GM12878 (cell line): ENCODE measurements at regions of chr1 and their contacts with region 1.

Region 1: GRCh38 chr1:35451125-35451528 is 106.1 kb downstream of the KIAA0319L start:
- DNase-seq: no peak
- ATAC-seq: peak; percentile 99
- H3K4me3 ChIP-seq: no peak overlapping the region
- H3K27ac ChIP-seq: no peak overlapping the region
- H3K4me1 ChIP-seq: no peaks in the 10 kb centered on the region
- H3K27me3 ChIP-seq: no peaks in the 10 kb centered on the region
- CTCF ChIP-seq: peak; percentile 87 to 90 (median 88)
- EP300 ChIP-seq: no peak
- POLR2A ChIP-seq: no peak
- RAD21 ChIP-seq: peak; percentile 97

Region 2: GRCh38 chr1:35437200-35437599 is 13.9 kb before region 1 on chr1:
- CTCF ChIA-PET with region 1: interaction called, 49 read pairs
- POLR2A ChIA-PET with region 1: no interaction called
- RAD21 ChIA-PET with region 1: interaction called, 6 read pairs
- SMC1A ChIA-PET with region 1: interaction called, 11 read pairs
- in situ Hi-C with region 1: no loop called
- intact Hi-C with region 1: no loop called
- DNase-seq: no peak
- ATAC-seq: no peak
- H3K4me3 ChIP-seq: no peak overlapping the region
- H3K27ac ChIP-seq: no peak overlapping the region
- H3K4me1 ChIP-seq: no peaks in the 10 kb centered on the region
- H3K27me3 ChIP-seq: no peaks in the 10 kb centered on the region
- CTCF ChIP-seq: no peak
- EP300 ChIP-seq: no peak
- POLR2A ChIP-seq: no peak
- RAD21 ChIP-seq: no peak

Region 3: DNA sequence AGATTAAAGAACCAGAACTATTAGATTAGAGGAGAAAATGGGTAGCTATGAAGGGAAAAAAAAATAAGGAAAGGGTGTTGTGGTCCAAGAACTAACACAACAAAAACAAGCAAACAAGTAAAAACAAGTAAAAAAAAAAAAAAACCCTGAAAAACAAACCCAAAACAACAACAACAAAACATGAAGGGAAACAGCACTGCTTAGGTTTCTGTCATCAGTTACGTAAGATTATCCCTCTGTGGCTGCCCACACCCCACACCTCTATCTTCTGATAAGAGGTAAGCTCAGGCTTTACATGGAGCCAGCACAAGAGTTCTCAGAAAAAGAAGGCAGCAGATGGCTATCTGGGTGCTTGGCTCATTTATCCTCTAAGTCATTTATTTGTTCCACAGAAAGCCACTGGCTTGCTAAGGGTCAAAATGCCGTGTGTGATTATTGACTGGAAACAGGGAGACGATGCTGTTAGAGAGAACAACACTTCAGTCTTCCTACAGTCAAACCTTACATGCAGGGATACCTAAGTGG is 48.6 kb after region 1 on chr1:
- CTCF ChIA-PET with region 1: interaction called, 34 read pairs
- POLR2A ChIA-PET with region 1: no interaction called
- RAD21 ChIA-PET with region 1: interaction called, 28 read pairs
- SMC1A ChIA-PET with region 1: interaction called, 44 read pairs
- in situ Hi-C with region 1: no loop called
- intact Hi-C with region 1: no loop called
- DNase-seq: no peak
- ATAC-seq: no peak; the same call in 2 of the 3 replicates
- H3K4me3 ChIP-seq: no peak overlapping the region
- H3K27ac ChIP-seq: no peak overlapping the region
- H3K4me1 ChIP-seq: no peaks in the 10 kb centered on the region
- H3K27me3 ChIP-seq: no peaks in the 10 kb centered on the region
- CTCF ChIP-seq: no peak
- EP300 ChIP-seq: no peak
- POLR2A ChIP-seq: no peak
- RAD21 ChIP-seq: no peak

Region 4: DNA sequence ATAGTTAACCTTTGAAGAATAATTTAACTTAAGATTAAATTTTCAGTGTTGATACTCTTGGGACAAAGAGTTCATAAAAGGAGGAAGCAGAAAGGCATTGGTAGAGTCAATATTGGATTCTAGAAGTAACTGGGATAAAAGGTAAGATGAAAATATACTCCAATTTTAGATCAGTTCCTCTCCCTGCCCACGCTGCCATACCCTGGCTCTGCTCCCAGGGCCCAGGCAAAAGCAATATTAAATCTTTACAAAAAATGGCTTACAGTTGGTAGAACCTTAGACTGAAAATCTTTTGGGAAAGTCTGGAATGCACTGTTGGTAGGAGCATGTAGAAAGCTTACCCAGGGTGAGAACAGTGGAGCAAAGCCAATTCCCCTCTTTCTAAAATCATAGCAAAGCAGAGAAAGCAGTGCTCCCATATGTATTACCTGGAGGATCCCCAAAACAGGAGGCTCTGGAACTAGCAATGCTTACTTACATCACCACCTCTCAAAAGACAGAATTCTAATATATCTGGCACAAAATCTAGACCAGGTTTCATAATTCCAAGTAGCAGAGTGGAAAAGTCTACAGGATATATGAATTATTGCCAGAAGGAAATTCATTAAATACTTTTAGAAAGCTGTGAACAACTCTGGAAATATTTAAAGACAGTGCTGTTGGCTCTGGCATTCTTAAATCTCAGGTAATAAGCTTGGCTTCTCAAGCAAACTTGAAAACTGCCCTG is 81.5 kb after region 1 on chr1:
- CTCF ChIA-PET with region 1: interaction called, 260 read pairs
- POLR2A ChIA-PET with region 1: interaction called, 9 read pairs
- RAD21 ChIA-PET with region 1: interaction called, 139 read pairs
- SMC1A ChIA-PET with region 1: interaction called, 254 read pairs
- in situ Hi-C with region 1: no loop called
- intact Hi-C with region 1: no loop called
- DNase-seq: no peak
- ATAC-seq: no peak
- H3K4me3 ChIP-seq: no peak overlapping the region
- H3K27ac ChIP-seq: no peak overlapping the region
- H3K4me1 ChIP-seq: 0 out of 2 replicates have a peak, but pooled peaks cover under 1% of the 10 kb centered on the region
- H3K27me3 ChIP-seq: no peaks in the 10 kb centered on the region
- CTCF ChIP-seq: no peak
- EP300 ChIP-seq: no peak
- POLR2A ChIP-seq: no peak
- RAD21 ChIP-seq: no peak

Region 5: DNA sequence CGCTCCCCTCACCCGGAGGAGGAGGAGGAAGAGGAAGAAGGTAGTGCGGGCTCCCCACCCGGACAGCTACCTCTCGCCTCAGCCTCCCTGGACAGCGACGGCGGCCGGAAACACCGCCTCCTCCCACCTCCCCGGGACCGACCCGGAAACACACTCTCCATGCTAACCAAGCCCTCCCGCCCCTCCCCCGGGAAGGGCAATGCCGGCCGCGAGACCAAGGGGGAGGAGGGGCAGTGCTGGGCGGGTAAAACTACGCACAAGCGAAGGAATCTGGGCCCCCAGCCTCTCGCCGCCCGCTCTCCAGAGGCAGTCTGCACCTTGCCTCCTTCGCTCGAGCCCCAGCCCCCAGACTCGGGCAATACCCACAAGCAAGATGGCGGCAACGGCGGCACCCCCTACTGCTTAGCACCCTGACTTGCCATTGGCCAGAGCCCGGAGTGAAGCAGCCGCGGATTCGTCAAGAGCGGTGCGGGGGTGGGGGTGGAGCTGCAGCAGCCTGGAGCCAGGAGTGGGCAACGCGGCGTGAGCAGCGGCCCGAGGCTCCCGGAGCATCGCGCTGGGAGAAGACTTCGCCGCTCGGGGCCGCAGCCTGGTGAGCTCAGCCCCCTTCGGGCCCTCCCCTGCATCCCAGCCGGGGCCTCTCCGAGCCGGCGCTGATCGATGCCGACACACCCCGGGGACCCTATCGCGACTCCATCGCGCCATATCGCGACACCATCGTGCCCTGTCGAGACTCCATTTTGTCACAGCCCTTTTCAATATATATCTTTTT is 106.4 kb after region 1 on chr1 and contains the starts of genes KIAA0319L and NCDN:
- CTCF ChIA-PET with region 1: interaction called, 95 read pairs
- POLR2A ChIA-PET with region 1: interaction called, 5 read pairs
- RAD21 ChIA-PET with region 1: interaction called, 46 read pairs
- SMC1A ChIA-PET with region 1: interaction called, 67 read pairs
- in situ Hi-C with region 1: loop called (anchors 5 kb)
- intact Hi-C with region 1: no loop called
- DNase-seq: peak; percentile 85
- ATAC-seq: peak; percentile 94
- H3K4me3 ChIP-seq: peak within 1 kb of the TSS; percentile 67
- H3K27ac ChIP-seq: peak within 1 kb of the TSS; percentile 97
- H3K4me1 ChIP-seq: peaks cover 10% of the 10 kb centered on the region
- H3K27me3 ChIP-seq: no peaks in the 10 kb centered on the region
- CTCF ChIP-seq: no peak
- EP300 ChIP-seq: no peak
- POLR2A ChIP-seq: peak; percentile 93
- RAD21 ChIP-seq: no peak
- polyA plus RNA-seq, gene KIAA0319L: 2.6 to 5.9 TPM
- polyA plus RNA-seq, gene NCDN: 1.8 to 2.0 TPM

Region 6: GRCh38 chr1:35603468-35603867 is 152.3 kb after region 1 on chr1:
- CTCF ChIA-PET with region 1: interaction called, 10 read pairs
- POLR2A ChIA-PET with region 1: interaction called, 4 read pairs
- RAD21 ChIA-PET with region 1: no interaction called
- SMC1A ChIA-PET with region 1: interaction called, 3 read pairs
- in situ Hi-C with region 1: no loop called
- intact Hi-C with region 1: no loop called
- DNase-seq: no peak
- ATAC-seq: no peak
- H3K4me3 ChIP-seq: no peak overlapping the region
- H3K27ac ChIP-seq: no peak overlapping the region
- H3K4me1 ChIP-seq: no peaks in the 10 kb centered on the region
- H3K27me3 ChIP-seq: no peaks in the 10 kb centered on the region
- CTCF ChIP-seq: no peak
- EP300 ChIP-seq: no peak
- POLR2A ChIP-seq: no peak
- RAD21 ChIP-seq: no peak

Region 7: DNA sequence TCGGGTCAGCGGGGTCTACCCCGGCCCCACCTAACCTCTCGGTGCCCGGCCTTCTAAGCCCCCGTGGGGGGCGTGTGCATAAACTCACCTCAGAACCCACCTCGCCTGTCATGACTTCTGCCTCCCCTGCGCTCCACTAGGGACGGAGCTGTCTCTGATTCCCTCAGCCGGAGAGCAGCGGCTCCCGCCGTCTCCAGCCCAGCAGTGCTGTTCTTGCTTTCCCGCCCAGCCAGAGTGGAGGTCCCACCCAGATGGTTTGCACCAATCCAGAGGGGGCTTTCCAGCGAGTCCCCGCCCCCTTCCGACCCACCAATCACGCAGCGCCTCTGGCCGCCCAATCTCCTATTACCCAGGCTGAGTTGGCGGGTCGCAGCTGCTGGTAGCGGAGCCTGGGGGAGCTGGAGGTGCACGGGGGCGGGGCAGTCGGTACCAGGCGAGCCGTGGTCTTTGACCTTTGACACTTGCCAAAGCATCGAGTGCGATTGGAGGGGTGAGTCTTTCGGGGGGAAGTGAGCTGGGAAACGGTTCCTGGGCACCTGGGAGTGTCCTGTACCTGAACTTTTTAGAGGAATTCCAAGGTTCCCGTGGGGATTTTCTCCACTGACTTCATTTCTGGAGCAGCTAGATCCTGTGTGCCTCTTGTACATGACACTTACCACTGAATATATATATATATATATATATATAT is 318.8 kb after region 1 on chr1 and contains the start of gene CLSPN:
- CTCF ChIA-PET with region 1: interaction called, 18 read pairs
- POLR2A ChIA-PET with region 1: no interaction called
- RAD21 ChIA-PET with region 1: interaction called, 10 read pairs
- SMC1A ChIA-PET with region 1: interaction called, 13 read pairs
- in situ Hi-C with region 1: no loop called
- intact Hi-C with region 1: loop called (anchors 5 kb)
- DNase-seq: peak; percentile 86
- ATAC-seq: peak; percentile 95
- H3K4me3 ChIP-seq: peak within 1 kb of the TSS; percentile 78
- H3K27ac ChIP-seq: peak within 1 kb of the TSS; percentile 91
- H3K4me1 ChIP-seq: no peaks in the 10 kb centered on the region
- H3K27me3 ChIP-seq: no peaks in the 10 kb centered on the region
- CTCF ChIP-seq: no peak
- EP300 ChIP-seq: no peak
- POLR2A ChIP-seq: peak; percentile 91
- RAD21 ChIP-seq: no peak
- polyA plus RNA-seq, gene CLSPN: 13.9 to 16.6 TPM